WTC11 (cell line): ENCODE measurements at regions of chr14 and their contacts with region 1.

Region 1: DNA sequence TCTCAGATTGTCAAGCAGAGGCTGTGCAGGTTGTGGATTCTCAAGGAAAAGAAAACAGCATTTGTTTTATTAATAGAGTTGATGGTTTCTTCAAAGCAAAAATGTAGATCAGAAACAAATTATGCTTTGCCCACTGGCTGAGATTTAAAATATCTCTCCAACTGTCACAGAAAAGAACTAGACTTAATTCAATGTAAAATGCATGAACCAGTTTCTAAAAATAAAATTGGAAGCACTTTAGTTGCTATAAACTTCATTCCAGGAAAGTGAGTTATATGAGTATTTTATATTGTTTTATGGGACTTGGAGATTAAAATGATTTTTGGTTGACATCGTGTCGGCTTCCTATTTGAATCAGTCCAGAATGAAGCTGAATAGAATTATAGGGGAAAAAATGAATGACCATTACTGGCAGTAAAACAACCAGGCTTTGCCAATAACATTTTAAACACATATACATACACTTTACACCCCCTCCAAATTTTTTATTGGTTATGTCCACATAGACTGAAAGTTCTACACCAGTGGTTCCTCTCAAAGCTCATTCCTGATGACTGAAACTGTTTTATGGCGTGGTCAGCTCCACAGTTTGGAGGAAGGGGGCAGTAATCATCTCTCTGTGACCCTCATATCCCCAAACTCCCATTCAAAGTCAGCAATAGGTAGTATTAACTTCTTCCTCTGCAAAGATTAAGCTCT is 55.5 kb upstream of the DAAM1 start:
- DNase-seq: no peak
- ATAC-seq: peak; percentile 38; the same call in 1 of the 2 replicates
- H3K4me3 Mint-ChIP-seq: no peak overlapping the region
- H3K27ac Mint-ChIP-seq: no peak overlapping the region
- H3K4me1 Mint-ChIP-seq: no peaks in the 10 kb centered on the region
- H3K27me3 Mint-ChIP-seq: no peaks in the 10 kb centered on the region
- CTCF ChIP-seq: no peak

Region 2: GRCh38 chr14:59004012-59004411 is 128.9 kb before region 1 on chr14:
- CTCF ChIA-PET with region 1: no interaction called
- POLR2A ChIA-PET with region 1: no interaction called
- DNase-seq: no peak
- ATAC-seq: no peak
- H3K4me3 Mint-ChIP-seq: no peak overlapping the region
- H3K27ac Mint-ChIP-seq: no peak overlapping the region
- H3K4me1 Mint-ChIP-seq: no peaks in the 10 kb centered on the region
- H3K27me3 Mint-ChIP-seq: no peaks in the 10 kb centered on the region
- CTCF ChIP-seq: no peak

Region 3: DNA sequence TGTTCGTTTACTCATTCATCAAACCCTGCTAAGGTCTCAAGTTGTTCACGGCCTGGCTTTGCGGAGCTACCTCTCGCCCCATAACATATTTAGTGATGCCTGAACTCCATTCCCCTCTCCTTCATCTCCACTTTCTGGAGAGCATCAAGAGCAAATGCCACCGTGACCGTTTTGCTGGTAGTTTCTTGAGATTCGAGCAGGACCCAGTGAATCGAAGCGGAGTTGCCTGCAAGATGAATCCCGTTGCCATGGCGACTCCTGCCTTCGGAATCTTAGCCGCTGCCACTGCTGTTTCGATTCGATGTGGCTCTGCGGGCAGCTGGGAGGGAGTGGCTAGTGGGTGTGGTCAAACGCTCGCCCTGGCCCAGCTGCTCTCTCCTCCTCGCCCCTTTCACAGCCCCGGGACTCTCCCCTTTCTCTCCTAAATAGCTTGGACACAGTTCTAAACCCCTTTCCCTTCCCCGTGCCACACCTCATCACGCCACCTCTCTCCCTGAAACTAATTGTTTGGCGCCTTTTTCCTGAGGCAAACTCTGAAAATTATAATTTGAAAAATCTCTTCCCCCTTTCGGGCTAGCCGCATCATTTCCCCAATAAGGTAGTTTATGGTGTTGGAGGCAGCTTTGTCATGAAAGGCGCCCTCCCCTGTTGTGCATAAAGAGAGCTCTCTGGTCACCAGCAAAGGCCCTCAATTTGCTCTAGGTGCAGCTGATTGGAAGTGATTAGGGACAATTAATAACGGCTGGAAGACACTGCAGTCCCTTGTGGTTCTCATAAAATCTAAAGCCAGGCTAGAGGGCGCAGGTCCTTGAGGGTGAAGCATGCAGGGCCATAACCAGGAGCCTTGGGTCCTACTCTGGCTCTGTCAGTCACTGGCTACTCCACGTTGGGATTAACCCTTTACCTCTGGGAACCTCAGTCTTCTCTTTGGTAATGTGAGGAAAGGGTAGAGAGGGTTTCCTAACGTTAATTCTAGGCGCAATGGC is 57.1 kb after region 1 on chr14:
- CTCF ChIA-PET with region 1: interaction called, 13 read pairs
- POLR2A ChIA-PET with region 1: no interaction called
- DNase-seq: peak; percentile 92
- ATAC-seq: peak; percentile 58
- H3K4me3 Mint-ChIP-seq: peak overlapping the region; percentile 93
- H3K27ac Mint-ChIP-seq: peak overlapping the region; percentile 74; the same call in 1 of the 2 replicates
- H3K4me1 Mint-ChIP-seq: peaks cover 17% of the 10 kb centered on the region
- H3K27me3 Mint-ChIP-seq: peaks cover 29% of the 10 kb centered on the region
- CTCF ChIP-seq: no peak

Region 4: DNA sequence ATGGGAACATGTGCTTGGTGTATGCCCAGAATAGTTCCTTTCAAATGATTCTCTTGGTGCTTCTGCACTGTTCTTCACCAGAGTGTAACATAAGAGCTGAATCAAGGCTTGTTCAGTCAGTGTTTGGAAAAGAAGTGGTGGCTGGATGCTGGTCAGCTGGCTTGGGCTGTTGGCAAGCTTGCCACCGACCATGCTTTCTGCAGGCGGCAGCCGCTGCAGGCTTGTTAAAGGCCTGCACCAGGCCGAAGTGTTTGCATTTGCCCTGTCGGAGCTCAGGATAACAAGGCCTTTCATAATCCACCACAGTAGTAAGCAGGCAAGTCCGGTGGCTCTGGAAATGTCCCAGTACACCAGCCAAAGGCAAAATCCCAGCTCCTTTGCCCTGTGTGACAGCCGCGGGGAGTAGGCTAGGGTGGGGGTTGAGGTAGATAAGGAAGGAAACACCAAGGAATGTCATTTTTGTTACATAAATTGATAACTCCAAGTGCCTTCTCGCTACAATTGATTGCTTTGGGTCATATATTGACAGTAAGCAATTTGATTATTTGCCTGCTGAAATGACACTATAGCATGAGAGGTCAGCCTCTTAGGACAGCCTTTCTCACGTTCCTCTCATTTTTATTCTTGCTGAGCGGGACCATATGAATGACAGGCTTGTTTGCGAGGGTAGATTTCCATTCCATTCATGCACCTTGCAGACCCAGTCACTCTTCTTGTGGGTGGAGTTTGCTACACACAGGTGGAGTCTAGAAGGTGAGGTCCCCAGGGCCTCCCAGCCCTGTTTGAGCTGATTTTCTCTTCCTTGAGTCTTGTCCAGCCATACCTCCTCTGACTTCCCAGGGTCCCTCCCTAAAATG is 82.6 kb after region 1 on chr14:
- CTCF ChIA-PET with region 1: no interaction called
- POLR2A ChIA-PET with region 1: no interaction called
- DNase-seq: no peak
- ATAC-seq: no peak
- H3K4me3 Mint-ChIP-seq: no peak overlapping the region
- H3K27ac Mint-ChIP-seq: peak overlapping the region; percentile 64
- H3K4me1 Mint-ChIP-seq: peaks cover 47% of the 10 kb centered on the region
- H3K27me3 Mint-ChIP-seq: no peaks in the 10 kb centered on the region
- CTCF ChIP-seq: no peak

Region 5: GRCh38 chr14:59428581-59429012 is 295.7 kb after region 1 on chr14:
- CTCF ChIA-PET with region 1: interaction called, 13 read pairs
- POLR2A ChIA-PET with region 1: interaction called, 12 read pairs
- DNase-seq: no peak
- ATAC-seq: no peak
- H3K4me3 Mint-ChIP-seq: no peak overlapping the region
- H3K27ac Mint-ChIP-seq: no peak overlapping the region
- H3K4me1 Mint-ChIP-seq: peaks cover 9% of the 10 kb centered on the region
- H3K27me3 Mint-ChIP-seq: no peaks in the 10 kb centered on the region
- CTCF ChIP-seq: no peak

Region 6: DNA sequence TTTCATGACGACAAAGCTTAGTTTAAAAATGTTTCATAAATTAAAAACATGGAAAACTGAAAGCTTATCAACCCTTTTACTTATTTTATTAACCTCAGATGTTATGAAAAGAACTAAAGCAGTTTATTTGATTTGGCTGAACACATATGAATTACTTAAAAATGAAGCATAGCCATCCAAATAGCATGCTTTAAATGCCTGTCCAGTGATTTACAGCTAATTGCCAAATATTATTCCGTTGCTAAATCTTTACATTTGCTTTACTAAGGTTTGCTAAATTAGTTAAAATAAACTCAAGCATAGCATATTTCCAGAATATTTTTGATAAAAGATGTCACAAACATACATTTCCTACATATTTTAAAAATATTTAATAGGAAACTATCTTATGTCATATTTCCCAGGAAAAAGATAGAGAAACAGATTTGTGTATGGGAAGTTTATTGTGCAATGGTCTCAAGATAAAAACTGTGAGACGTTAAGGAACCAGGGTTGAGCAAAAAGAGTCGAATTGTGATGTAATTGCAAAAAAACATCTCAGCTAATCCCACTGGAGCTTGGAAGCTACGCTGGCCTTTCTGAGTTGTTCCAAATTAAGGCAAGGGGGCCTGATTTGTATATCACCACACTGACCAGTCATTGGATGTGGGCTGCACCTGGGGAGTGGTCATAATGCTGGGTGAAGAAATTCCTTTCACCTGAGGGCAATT is 306.5 kb after region 1 on chr14:
- CTCF ChIA-PET with region 1: interaction called, 14 read pairs
- POLR2A ChIA-PET with region 1: no interaction called
- DNase-seq: no peak
- ATAC-seq: peak; percentile 58
- H3K4me3 Mint-ChIP-seq: no peak overlapping the region
- H3K27ac Mint-ChIP-seq: no peak overlapping the region
- H3K4me1 Mint-ChIP-seq: no peaks in the 10 kb centered on the region
- H3K27me3 Mint-ChIP-seq: no peaks in the 10 kb centered on the region
- CTCF ChIP-seq: no peak